ENCODE measurements at regions of chr2 and their contacts with region 1.

Region 1: GRCh38 chr2:71068218-71069035 is at the start of gene NAGK:
- DNase-seq: peak; percentile 95 to 99 (median 97)
- ATAC-seq: peak; percentile 83 to 88 (median 86)
- H3K4me3 ChIP-seq: peak within 1 kb of the TSS; percentile 94 to 95
- H3K4me3 Mint-ChIP-seq: peak within 1 kb of the TSS; percentile 96 to 99 (median 99)
- H3K27ac ChIP-seq: peak within 1 kb of the TSS; percentile 89
- H3K27ac Mint-ChIP-seq: peak within 1 kb of the TSS; percentile 98 to 100
- H3K4me1 ChIP-seq: peaks cover 26 to 53% of the 10 kb centered on the region in 2 experiments
- H3K4me1 Mint-ChIP-seq: peaks cover 57 to 68% (median 63%) of the 10 kb centered on the region in 3 donors
- H3K27me3 ChIP-seq: no peaks in the 10 kb centered on the region
- H3K27me3 Mint-ChIP-seq: no peaks in the 10 kb centered on the region
- total RNA-seq, gene NAGK: 89.8 to 124 (median 111) TPM

Region 2: GRCh38 chr2:70726947-70727725 is 341.3 kb before region 1 on chr2:
- CTCF ChIA-PET with region 1: no interaction called
- POLR2A ChIA-PET with region 1: no interaction called
- DNase-seq: no peak
- ATAC-seq: no peak
- H3K4me3 ChIP-seq: no peak overlapping the region
- H3K4me3 Mint-ChIP-seq: no peak overlapping the region
- H3K27ac ChIP-seq: no peak overlapping the region
- H3K27ac Mint-ChIP-seq: no peak overlapping the region
- H3K4me1 ChIP-seq: no peaks in the 10 kb centered on the region
- H3K4me1 Mint-ChIP-seq: no peaks in the 10 kb centered on the region
- H3K27me3 ChIP-seq: peaks cover 0 to 7% of the 10 kb centered on the region in 2 experiments
- H3K27me3 Mint-ChIP-seq: peaks cover 0 to 5% of the 10 kb centered on the region in 2 donors

Region 3: GRCh38 chr2:71130113-71130904 is 61.9 kb after region 1 on chr2 and contains the starts of genes MCEE and MPHOSPH10:
- CTCF ChIA-PET with region 1: interaction called in 1 of 2 experiments, 5 read pairs
- POLR2A ChIA-PET with region 1: interaction called, 3 to 20 read pairs
- DNase-seq: peak; percentile 76 to 93 (median 86)
- ATAC-seq: peak; percentile 90 to 95 (median 94)
- H3K4me3 ChIP-seq: peak within 1 kb of the TSS; percentile 85 to 98
- H3K4me3 Mint-ChIP-seq: no peak within 1 kb of the TSS
- H3K27ac ChIP-seq: peak within 1 kb of the TSS; percentile 77
- H3K27ac Mint-ChIP-seq: peak within 1 kb of the TSS in 1 of 2 donors; percentile 70
- H3K4me1 ChIP-seq: peaks cover 17 to 20% of the 10 kb centered on the region in 2 experiments
- H3K4me1 Mint-ChIP-seq: peaks cover 19 to 26% (median 20%) of the 10 kb centered on the region in 3 donors
- H3K27me3 ChIP-seq: no peaks in the 10 kb centered on the region
- H3K27me3 Mint-ChIP-seq: no peaks in the 10 kb centered on the region
- total RNA-seq, gene MCEE: 13.7 to 22.4 (median 19.5) TPM
- total RNA-seq, gene MPHOSPH10: 34.8 to 49.6 (median 39.9) TPM

Measured in T-cell (primary cell).